ENCODE measurements at regions of chr16 and their contacts with region 1.

Region 1: DNA sequence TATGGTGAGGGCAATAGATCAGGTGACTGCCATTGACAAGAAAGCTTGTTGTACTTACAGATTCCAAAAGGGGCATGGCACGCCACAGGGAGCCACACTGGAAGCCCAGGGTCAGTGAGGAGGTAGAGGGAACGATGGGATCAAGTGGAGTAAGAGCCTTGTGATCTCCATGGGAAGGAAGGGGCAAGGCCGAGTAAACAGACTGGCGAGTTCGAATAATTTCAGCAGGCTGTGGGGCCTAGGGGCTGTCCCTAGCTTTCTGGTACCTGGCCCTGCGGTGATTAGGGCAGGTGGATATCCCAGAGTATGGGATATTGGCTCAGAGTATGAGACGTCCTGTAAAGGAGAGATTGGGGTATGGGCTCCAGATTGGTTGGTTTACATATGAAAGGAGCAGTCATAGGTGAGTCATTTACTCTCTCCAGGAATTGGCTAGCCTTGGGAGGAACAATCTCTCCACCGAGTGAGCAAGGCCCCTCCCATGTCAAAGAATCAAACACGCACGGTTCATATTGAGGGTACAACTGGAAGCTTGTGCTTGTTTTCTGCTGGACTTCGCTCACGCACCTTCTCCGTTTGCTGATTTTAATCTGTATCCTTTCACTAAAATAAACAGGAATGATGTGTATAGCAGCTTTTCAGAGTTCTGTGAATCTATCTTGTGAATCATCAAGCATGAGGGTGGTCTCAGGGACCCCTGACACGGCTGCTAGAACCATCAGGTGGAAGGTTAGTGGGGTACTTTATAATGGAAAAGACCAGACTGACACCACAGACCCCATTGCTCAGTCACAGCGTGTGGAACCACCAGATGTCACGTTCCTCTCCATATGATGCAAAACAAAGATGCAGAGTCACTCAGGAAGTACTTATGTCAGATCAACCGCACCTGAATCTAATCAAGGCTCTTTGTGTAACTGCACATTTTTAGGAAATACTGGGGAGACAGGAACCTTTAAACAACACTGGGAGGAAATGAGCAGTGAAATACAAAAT is 27.9 kb downstream of the GABARAPL2 start:
- DNase-seq: peak; percentile 79
- H3K4me3 ChIP-seq: no peak overlapping the region
- H3K27ac ChIP-seq: peak overlapping the region; percentile 78
- H3K4me1 ChIP-seq: peaks cover 30% of the 10 kb centered on the region
- H3K27me3 ChIP-seq: no peaks in the 10 kb centered on the region
- CTCF ChIP-seq: no peak

Region 2: GRCh38 chr16:74580833-74581232 is 1013.3 kb before region 1 on chr16:
- CTCF ChIA-PET with region 1: no interaction called
- POLR2A ChIA-PET with region 1: interaction called, 13 read pairs
- intact Hi-C with region 1: no loop called
- DNase-seq: no peak
- H3K4me3 ChIP-seq: no peak overlapping the region
- H3K27ac ChIP-seq: peak overlapping the region; percentile 21
- H3K4me1 ChIP-seq: peaks cover 75% of the 10 kb centered on the region
- H3K27me3 ChIP-seq: no peaks in the 10 kb centered on the region
- CTCF ChIP-seq: no peak